K562 (cell line): ENCODE measurements at regions of chr20 and their contacts with region 1.

Region 1: GRCh38 chr20:61786230-61786629 is 279.5 kb downstream of the TAF4 start:
- DNase-seq: no peak
- ATAC-seq: no peak
- H3K4me3 ChIP-seq: no peak overlapping the region
- H3K27ac ChIP-seq: no peak overlapping the region
- H3K4me1 ChIP-seq: no peaks in the 10 kb centered on the region
- H3K27me3 ChIP-seq: peaks cover 0 to 13% of the 10 kb centered on the region in 2 experiments; a peak in 2 of 5 replicates
- CTCF ChIP-seq: no peak
- EP300 ChIP-seq: no peak
- POLR2A ChIP-seq: no peak
- RAD21 ChIP-seq: no peak

Region 2: DNA sequence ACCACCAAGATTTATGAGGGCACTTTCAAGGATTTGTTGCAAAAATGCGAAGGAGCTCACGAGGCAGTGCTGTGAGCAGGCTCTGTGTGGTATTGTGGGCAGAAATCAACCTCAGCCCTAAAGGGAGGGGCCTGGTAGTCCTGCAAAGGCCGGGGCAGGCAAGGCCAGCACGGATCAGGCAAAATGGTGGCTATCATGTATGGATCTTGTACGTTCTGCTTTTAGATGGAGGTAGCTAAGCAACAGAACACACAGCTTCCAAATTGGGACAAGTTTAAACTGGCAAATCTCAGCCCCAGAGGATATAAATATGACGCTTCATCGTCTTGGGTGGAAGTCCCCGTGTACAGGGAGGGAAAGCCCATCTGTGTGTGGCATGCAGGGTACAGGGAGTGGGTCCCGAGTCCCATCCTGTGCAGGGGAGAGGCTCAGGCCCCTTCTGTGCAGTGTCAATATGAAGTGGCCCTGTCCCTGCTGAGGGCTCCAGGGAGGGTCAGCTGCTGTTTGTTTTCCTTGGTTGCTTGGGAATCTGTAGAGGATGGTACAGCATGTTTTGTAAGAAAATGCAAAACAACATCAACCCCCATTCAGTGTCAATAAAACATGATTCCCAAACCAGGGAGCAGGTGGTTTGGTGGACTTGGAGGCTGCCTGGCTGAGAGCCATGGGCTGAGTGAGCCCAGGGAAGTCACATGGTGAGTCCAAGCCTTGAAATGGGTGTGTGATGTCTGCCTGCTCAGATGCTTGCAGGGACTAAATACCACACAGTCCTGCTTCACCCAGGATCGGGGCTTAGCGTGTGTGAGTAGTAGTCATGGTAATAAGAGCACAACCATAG is 1965.8 kb before region 1 on chr20:
- CTCF ChIA-PET with region 1: no interaction called
- POLR2A ChIA-PET with region 1: no interaction called
- in situ Hi-C with region 1: loop called (anchors 10 kb)
- intact Hi-C with region 1: no loop called
- DNase-seq: no peak
- ATAC-seq: no peak
- H3K4me3 ChIP-seq: no peak overlapping the region
- H3K27ac ChIP-seq: no peak overlapping the region
- H3K4me1 ChIP-seq: no peaks in the 10 kb centered on the region
- H3K27me3 ChIP-seq: peaks cover 0 to 26% of the 10 kb centered on the region in 2 experiments; a peak in 1 of 5 replicates
- CTCF ChIP-seq: no peak
- EP300 ChIP-seq: no peak
- POLR2A ChIP-seq: no peak
- RAD21 ChIP-seq: no peak

Region 3: GRCh38 chr20:61744691-61745396 is 41.4 kb before region 1 on chr20:
- CTCF ChIA-PET with region 1: no interaction called
- POLR2A ChIA-PET with region 1: no interaction called
- in situ Hi-C with region 1: no loop called
- intact Hi-C with region 1: no loop called
- DNase-seq: peak in 1 of 4 experiments; percentile 6
- ATAC-seq: no peak
- H3K4me3 ChIP-seq: no peak overlapping the region
- H3K27ac ChIP-seq: no peak overlapping the region
- H3K4me1 ChIP-seq: no peaks in the 10 kb centered on the region
- H3K27me3 ChIP-seq: peaks cover 4 to 35% of the 10 kb centered on the region in 2 experiments; a peak in 4 of 5 replicates
- CTCF ChIP-seq: no peak
- EP300 ChIP-seq: no peak
- POLR2A ChIP-seq: no peak
- RAD21 ChIP-seq: no peak

Region 4: GRCh38 chr20:62117658-62118057 is 331.4 kb after region 1 on chr20:
- CTCF ChIA-PET with region 1: no interaction called
- POLR2A ChIA-PET with region 1: no interaction called
- in situ Hi-C with region 1: no loop called
- intact Hi-C with region 1: no loop called
- DNase-seq: no peak
- ATAC-seq: no peak
- H3K4me3 ChIP-seq: no peak overlapping the region
- H3K27ac ChIP-seq: no peak overlapping the region
- H3K4me1 ChIP-seq: peaks cover 4 to 40% of the 10 kb centered on the region in 2 experiments; a peak in 4 of 5 replicates
- H3K27me3 ChIP-seq: peaks cover 17 to 50% of the 10 kb centered on the region in 2 experiments
- CTCF ChIP-seq: no peak
- EP300 ChIP-seq: no peak
- POLR2A ChIP-seq: no peak
- RAD21 ChIP-seq: no peak

Region 5: DNA sequence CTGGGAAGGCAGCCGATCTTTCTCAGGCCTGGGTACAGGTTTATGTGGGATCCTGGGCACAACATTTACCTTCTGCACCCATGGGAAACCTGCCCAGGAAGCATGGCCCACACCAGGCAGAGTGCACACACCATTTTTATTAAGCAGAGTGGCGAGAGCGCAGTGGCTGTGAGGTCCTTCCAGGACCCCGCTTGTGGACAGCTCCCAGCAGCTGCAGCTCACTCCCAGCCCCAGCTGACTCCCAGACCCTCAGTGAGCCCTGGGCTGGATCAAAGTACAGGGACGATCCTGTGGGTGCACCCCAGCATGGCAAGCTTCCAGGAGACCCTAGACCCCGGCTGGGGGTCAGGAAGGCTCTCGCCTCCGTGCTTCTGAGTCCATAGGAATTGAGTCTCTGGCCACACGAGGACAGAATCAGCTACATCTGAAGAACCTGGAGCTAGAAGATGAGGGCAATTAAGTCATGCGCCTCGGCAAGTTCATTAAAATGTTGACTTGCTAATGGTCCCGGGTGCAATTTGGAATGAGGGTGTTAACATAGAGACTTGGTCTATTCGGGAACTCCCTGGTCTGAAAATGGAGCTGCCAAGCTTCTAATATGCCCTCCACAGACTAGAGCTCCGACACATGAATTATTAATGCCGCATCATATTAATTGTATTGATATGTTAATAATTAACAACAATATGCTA is 790.7 kb after region 1 on chr20:
- CTCF ChIA-PET with region 1: no interaction called
- POLR2A ChIA-PET with region 1: no interaction called
- in situ Hi-C with region 1: no loop called
- intact Hi-C with region 1: no loop called
- DNase-seq: peak; percentile 25 to 68 (median 60)
- ATAC-seq: peak; percentile 67
- H3K4me3 ChIP-seq: no peak overlapping the region
- H3K27ac ChIP-seq: no peak overlapping the region
- H3K4me1 ChIP-seq: peaks cover 1 to 26% of the 10 kb centered on the region in 2 experiments; a peak in 3 of 5 replicates
- H3K27me3 ChIP-seq: peaks cover 39 to 78% of the 10 kb centered on the region in 2 experiments
- CTCF ChIP-seq: no peak
- EP300 ChIP-seq: no peak
- POLR2A ChIP-seq: no peak
- RAD21 ChIP-seq: no peak